Activated CD4-positive, alpha-beta memory T cell treated with anti-CD3 and anti-CD28 coated beads for 36 hours (primary cell): ENCODE measurements at regions of chr9 and their contacts with region 1.

Region 1: GRCh38 chr9:19456996-19457692 is 48.3 kb downstream of the ACER2 start:
- DNase-seq: peak; percentile 72
- H3K4me3 Mint-ChIP-seq: no peak overlapping the region
- H3K27ac Mint-ChIP-seq: peak overlapping the region; percentile 2
- H3K4me1 Mint-ChIP-seq: peaks cover 5% of the 10 kb centered on the region
- H3K27me3 Mint-ChIP-seq: no peaks in the 10 kb centered on the region

Region 2: DNA sequence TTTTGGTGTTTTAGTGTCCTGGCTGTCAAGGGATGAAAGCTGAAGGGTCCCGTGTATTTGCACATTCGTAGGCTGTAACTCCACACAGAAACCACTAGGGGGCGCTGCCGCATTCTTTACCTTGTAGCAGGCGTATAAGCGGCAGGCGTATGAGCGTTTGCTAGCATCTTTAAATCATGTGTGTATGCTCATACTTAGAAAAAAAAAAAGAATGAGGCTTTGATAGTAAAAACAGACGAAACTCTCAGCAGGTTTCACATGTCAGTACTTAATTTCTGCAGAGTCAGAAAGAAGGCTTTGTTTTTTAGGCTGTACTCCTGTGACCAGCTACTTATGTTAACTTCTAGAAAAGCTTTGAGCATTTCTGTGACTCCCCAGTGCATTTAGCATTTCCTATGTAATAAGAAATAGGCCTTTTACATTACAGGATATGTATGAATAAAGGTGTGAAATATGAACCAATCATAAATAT is 1202.0 kb before region 1 on chr9:
- CTCF ChIA-PET with region 1: interaction called, 8 read pairs
- POLR2A ChIA-PET with region 1: no interaction called
- intact Hi-C with region 1: loop called (anchors 1 kb)
- DNase-seq: peak; percentile 79
- H3K4me3 Mint-ChIP-seq: no peak overlapping the region
- H3K27ac Mint-ChIP-seq: no peak overlapping the region
- H3K4me1 Mint-ChIP-seq: peaks cover 3% of the 10 kb centered on the region
- H3K27me3 Mint-ChIP-seq: peaks cover 8% of the 10 kb centered on the region

Region 3: DNA sequence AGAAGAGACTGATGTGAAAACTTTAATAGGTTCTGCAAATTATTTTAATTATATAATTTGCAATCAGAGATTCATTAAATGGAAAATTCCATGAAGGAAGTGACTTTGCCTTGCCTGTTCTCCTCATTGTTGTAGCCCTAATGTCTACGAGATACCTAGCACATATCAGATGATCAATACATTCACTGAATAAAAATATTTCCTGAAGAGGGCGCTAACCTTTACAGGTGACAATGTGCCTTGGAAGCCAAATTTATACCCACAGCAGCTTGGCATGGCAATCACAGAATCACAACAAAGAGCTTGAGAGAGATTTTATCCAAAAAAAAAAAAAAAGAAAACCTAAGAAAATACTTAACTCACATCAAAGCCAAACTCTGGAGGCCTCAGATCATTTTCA is 371.8 kb before region 1 on chr9:
- CTCF ChIA-PET with region 1: interaction called, 14 read pairs
- POLR2A ChIA-PET with region 1: no interaction called
- intact Hi-C with region 1: loop called (anchors 2 kb)
- DNase-seq: no peak
- H3K4me3 Mint-ChIP-seq: no peak overlapping the region
- H3K27ac Mint-ChIP-seq: no peak overlapping the region
- H3K4me1 Mint-ChIP-seq: no peaks in the 10 kb centered on the region
- H3K27me3 Mint-ChIP-seq: no peaks in the 10 kb centered on the region

Region 4: GRCh38 chr9:19174127-19174912 is 282.8 kb before region 1 on chr9:
- CTCF ChIA-PET with region 1: interaction called, 6 read pairs
- POLR2A ChIA-PET with region 1: no interaction called
- intact Hi-C with region 1: loop called (anchors 1 kb)
- DNase-seq: peak; percentile 79
- H3K4me3 Mint-ChIP-seq: no peak overlapping the region
- H3K27ac Mint-ChIP-seq: no peak overlapping the region
- H3K4me1 Mint-ChIP-seq: peaks cover 22% of the 10 kb centered on the region
- H3K27me3 Mint-ChIP-seq: no peaks in the 10 kb centered on the region

Region 5: GRCh38 chr9:19201899-19202891 is 254.9 kb before region 1 on chr9:
- CTCF ChIA-PET with region 1: no interaction called
- POLR2A ChIA-PET with region 1: no interaction called
- intact Hi-C with region 1: no loop called
- DNase-seq: no peak
- H3K4me3 Mint-ChIP-seq: no peak overlapping the region
- H3K27ac Mint-ChIP-seq: no peak overlapping the region
- H3K4me1 Mint-ChIP-seq: peaks cover 2% of the 10 kb centered on the region
- H3K27me3 Mint-ChIP-seq: no peaks in the 10 kb centered on the region

Region 6: GRCh38 chr9:19230356-19231125 is 226.6 kb before region 1 on chr9 and contains the start of gene DENND4C:
- CTCF ChIA-PET with region 1: interaction called, 9 read pairs
- POLR2A ChIA-PET with region 1: no interaction called
- intact Hi-C with region 1: loop called (anchors 5 kb)
- DNase-seq: peak; percentile 83
- H3K4me3 Mint-ChIP-seq: no peak within 1 kb of the TSS
- H3K27ac Mint-ChIP-seq: peak within 1 kb of the TSS; percentile 62
- H3K4me1 Mint-ChIP-seq: peaks cover 10% of the 10 kb centered on the region
- H3K27me3 Mint-ChIP-seq: no peaks in the 10 kb centered on the region
- total RNA-seq, gene DENND4C: 17.8 to 20.2 TPM

Region 7: GRCh38 chr9:19408693-19409400 is 48.3 kb before region 1 on chr9 and contains the start of gene ACER2:
- CTCF ChIA-PET with region 1: no interaction called
- POLR2A ChIA-PET with region 1: no interaction called
- intact Hi-C with region 1: loop called (anchors 2 kb)
- DNase-seq: peak; percentile 96
- H3K4me3 Mint-ChIP-seq: peak within 1 kb of the TSS; percentile 95
- H3K27ac Mint-ChIP-seq: peak within 1 kb of the TSS; percentile 71
- H3K4me1 Mint-ChIP-seq: peaks cover 12% of the 10 kb centered on the region
- H3K27me3 Mint-ChIP-seq: no peaks in the 10 kb centered on the region
- total RNA-seq, gene ACER2: 1.8 TPM